ENCODE measurements at regions of chr9 and their contacts with region 1.

Region 1: GRCh38 chr9:7935681-7936080 is 136.1 kb upstream of the DMAC1 start:
- DNase-seq: peak in 7 of 9 donors; percentile 54 to 83 (median 74)
- ATAC-seq: peak; percentile 97
- H3K4me3 ChIP-seq: peak overlapping the region; percentile 41
- H3K4me3 Mint-ChIP-seq: peak overlapping the region; percentile 63 to 85 (median 78)
- H3K27ac ChIP-seq: peak overlapping the region; percentile 58
- H3K27ac Mint-ChIP-seq: peak overlapping the region; percentile 90 to 99 (median 96)
- H3K4me1 ChIP-seq: peaks cover 19 to 29% of the 10 kb centered on the region in 2 donors
- H3K4me1 Mint-ChIP-seq: peaks cover 9 to 45% (median 35%) of the 10 kb centered on the region in 7 donors
- H3K27me3 ChIP-seq: no peaks in the 10 kb centered on the region
- H3K27me3 Mint-ChIP-seq: no peaks in the 10 kb centered on the region

Region 2: DNA sequence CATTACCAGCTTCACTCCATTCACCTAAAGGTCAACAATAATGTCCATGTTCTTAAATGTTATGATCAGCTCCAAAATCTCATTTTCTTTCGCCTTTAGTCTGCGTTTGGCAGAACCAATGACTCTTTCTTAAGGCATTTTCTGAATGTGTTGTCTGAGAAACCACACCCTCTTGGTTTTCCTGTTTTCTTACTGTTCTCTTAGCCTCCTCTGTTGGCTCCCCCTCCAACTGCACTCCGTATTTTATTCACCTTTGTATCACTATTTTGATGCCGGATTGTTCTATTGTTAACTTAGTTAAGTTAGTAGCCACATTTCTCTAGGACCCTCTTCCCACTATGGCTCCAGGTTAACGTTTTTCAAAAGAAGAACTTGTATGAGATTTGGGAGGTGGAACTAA is 321.8 kb before region 1 on chr9:
- CTCF ChIA-PET with region 1: no interaction called
- POLR2A ChIA-PET with region 1: no interaction called
- intact Hi-C with region 1: loop called in 1 of 2 experiments (anchors 5 kb)
- DNase-seq: peak in 6 of 9 donors; percentile 15 to 59 (median 46)
- ATAC-seq: peak; percentile 70
- H3K4me3 ChIP-seq: peak overlapping the region; percentile 0
- H3K4me3 Mint-ChIP-seq: peak overlapping the region; percentile 68 to 90 (median 82)
- H3K27ac ChIP-seq: peak overlapping the region; percentile 31
- H3K27ac Mint-ChIP-seq: peak overlapping the region; percentile 71 to 87 (median 85)
- H3K4me1 ChIP-seq: peaks cover 9 to 29% of the 10 kb centered on the region in 2 donors
- H3K4me1 Mint-ChIP-seq: peaks cover 18 to 50% (median 38%) of the 10 kb centered on the region in 7 donors
- H3K27me3 ChIP-seq: no peaks in the 10 kb centered on the region
- H3K27me3 Mint-ChIP-seq: peaks cover 0 to 17% (median 0%) of the 10 kb centered on the region in 5 donors

Region 3: GRCh38 chr9:7622481-7622880 is 313.2 kb before region 1 on chr9:
- CTCF ChIA-PET with region 1: interaction called, 3 read pairs
- POLR2A ChIA-PET with region 1: no interaction called
- intact Hi-C with region 1: loop called in 1 of 2 experiments (anchors 5 kb)
- DNase-seq: no peak
- ATAC-seq: no peak
- H3K4me3 ChIP-seq: no peak overlapping the region
- H3K4me3 Mint-ChIP-seq: no peak overlapping the region
- H3K27ac ChIP-seq: no peak overlapping the region
- H3K27ac Mint-ChIP-seq: no peak overlapping the region
- H3K4me1 ChIP-seq: peaks cover 10 to 15% of the 10 kb centered on the region in 2 donors
- H3K4me1 Mint-ChIP-seq: peaks cover 12 to 29% (median 23%) of the 10 kb centered on the region in 7 donors
- H3K27me3 ChIP-seq: no peaks in the 10 kb centered on the region
- H3K27me3 Mint-ChIP-seq: no peaks in the 10 kb centered on the region

Region 4: GRCh38 chr9:7756088-7756487 is 179.6 kb before region 1 on chr9:
- CTCF ChIA-PET with region 1: no interaction called
- POLR2A ChIA-PET with region 1: no interaction called
- intact Hi-C with region 1: loop called in 1 of 2 experiments (anchors 10 kb)
- DNase-seq: no peak
- ATAC-seq: peak; percentile 61
- H3K4me3 ChIP-seq: no peak overlapping the region
- H3K4me3 Mint-ChIP-seq: peak overlapping the region in 1 of 10 donors; percentile 7
- H3K27ac ChIP-seq: no peak overlapping the region
- H3K27ac Mint-ChIP-seq: peak overlapping the region in 3 of 9 donors; percentile 13 to 87 (median 16)
- H3K4me1 ChIP-seq: no peaks in the 10 kb centered on the region
- H3K4me1 Mint-ChIP-seq: peaks cover 0 to 27% (median 8%) of the 10 kb centered on the region in 7 donors
- H3K27me3 ChIP-seq: no peaks in the 10 kb centered on the region
- H3K27me3 Mint-ChIP-seq: no peaks in the 10 kb centered on the region

Region 5: GRCh38 chr9:7799234-7799943 is 136.3 kb before region 1 on chr9 and contains the start of gene DMAC1:
- CTCF ChIA-PET with region 1: no interaction called
- POLR2A ChIA-PET with region 1: interaction called, 6 read pairs
- intact Hi-C with region 1: loop called (anchors 1 to 2 kb)
- DNase-seq: peak; percentile 50 to 79 (median 72)
- ATAC-seq: peak; percentile 96
- H3K4me3 ChIP-seq: peak within 1 kb of the TSS; percentile 96
- H3K4me3 Mint-ChIP-seq: peak within 1 kb of the TSS; percentile 91 to 98 (median 95)
- H3K27ac ChIP-seq: peak within 1 kb of the TSS; percentile 88
- H3K27ac Mint-ChIP-seq: peak within 1 kb of the TSS; percentile 90 to 98 (median 93)
- H3K4me1 ChIP-seq: peaks cover 0 to 8% of the 10 kb centered on the region in 2 donors
- H3K4me1 Mint-ChIP-seq: peaks cover 12 to 62% (median 40%) of the 10 kb centered on the region in 7 donors
- H3K27me3 ChIP-seq: no peaks in the 10 kb centered on the region
- H3K27me3 Mint-ChIP-seq: peaks cover 0 to under 1% (median 0%) of the 10 kb centered on the region in 5 donors
- total RNA-seq, gene DMAC1: 17.5 to 54.1 (median 44.3) TPM

Region 6: GRCh38 chr9:7844242-7844641 is 91.4 kb before region 1 on chr9:
- CTCF ChIA-PET with region 1: interaction called, 3 read pairs
- POLR2A ChIA-PET with region 1: no interaction called
- intact Hi-C with region 1: loop called in 1 of 2 experiments (anchors 1 kb)
- DNase-seq: peak in 6 of 9 donors; percentile 2 to 44 (median 24)
- ATAC-seq: peak; percentile 73
- H3K4me3 ChIP-seq: no peak overlapping the region
- H3K4me3 Mint-ChIP-seq: peak overlapping the region in 1 of 10 donors; percentile 6
- H3K27ac ChIP-seq: no peak overlapping the region
- H3K27ac Mint-ChIP-seq: no peak overlapping the region
- H3K4me1 ChIP-seq: no peaks in the 10 kb centered on the region
- H3K4me1 Mint-ChIP-seq: peaks cover 0 to 3% (median 0%) of the 10 kb centered on the region in 7 donors
- H3K27me3 ChIP-seq: no peaks in the 10 kb centered on the region
- H3K27me3 Mint-ChIP-seq: peaks cover 0 to 4% (median 0%) of the 10 kb centered on the region in 5 donors

Region 7: DNA sequence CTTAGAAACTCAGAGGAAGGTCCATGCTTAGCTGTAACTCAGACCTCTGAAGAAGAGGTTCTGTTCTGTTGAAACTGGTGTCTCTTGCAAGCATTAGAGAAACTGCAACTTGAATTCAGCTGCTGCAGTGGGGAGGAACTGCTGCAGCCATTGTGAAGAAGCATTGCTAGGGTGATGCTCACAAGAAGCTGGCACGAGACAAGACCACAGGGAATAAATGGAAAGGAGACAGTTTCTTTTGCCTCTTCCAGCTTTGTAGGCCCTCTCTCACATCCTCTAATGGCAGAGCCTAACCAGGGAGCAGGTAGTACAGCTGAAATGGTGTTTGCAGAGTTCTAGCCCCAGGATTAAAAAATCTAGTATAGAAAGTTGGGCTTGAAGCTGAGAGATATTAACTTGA is 11.9 kb after region 1 on chr9:
- CTCF ChIA-PET with region 1: no interaction called
- POLR2A ChIA-PET with region 1: interaction called, 6 read pairs
- intact Hi-C with region 1: loop called in 1 of 2 experiments (anchors 1 kb)
- DNase-seq: no peak
- ATAC-seq: no peak
- H3K4me3 ChIP-seq: no peak overlapping the region
- H3K4me3 Mint-ChIP-seq: no peak overlapping the region
- H3K27ac ChIP-seq: no peak overlapping the region
- H3K27ac Mint-ChIP-seq: peak overlapping the region in 2 of 9 donors; percentile 38 to 49
- H3K4me1 ChIP-seq: no peaks in the 10 kb centered on the region
- H3K4me1 Mint-ChIP-seq: peaks cover 0 to 16% (median 8%) of the 10 kb centered on the region in 7 donors
- H3K27me3 ChIP-seq: no peaks in the 10 kb centered on the region
- H3K27me3 Mint-ChIP-seq: no peaks in the 10 kb centered on the region